Lower leg skin (tissue), 4 donors: ENCODE measurements at regions of chr3 and their contacts with region 1.

Region 1: GRCh38 chr3:15875016-15875689 is 77.4 kb upstream of the ANKRD28 start:
- DNase-seq: no peak
- H3K4me3 ChIP-seq: no peak overlapping the region
- CTCF ChIP-seq: no peak
- POLR2A ChIP-seq: no peak

Region 2: GRCh38 chr3:14885292-14885691 is 989.9 kb before region 1 on chr3:
- intact Hi-C with region 1: loop called (anchors 10 kb)
- DNase-seq: no peak
- H3K4me3 ChIP-seq: no peak overlapping the region
- CTCF ChIP-seq: no peak
- POLR2A ChIP-seq: no peak

Region 3: GRCh38 chr3:15753056-15753710 is 122.0 kb before region 1 on chr3:
- intact Hi-C with region 1: no loop called
- DNase-seq: no peak
- H3K4me3 ChIP-seq: no peak overlapping the region
- CTCF ChIP-seq: no peak
- POLR2A ChIP-seq: no peak

Region 4: GRCh38 chr3:15768421-15769255 is 106.5 kb before region 1 on chr3:
- intact Hi-C with region 1: no loop called
- DNase-seq: no peak
- H3K4me3 ChIP-seq: no peak overlapping the region
- CTCF ChIP-seq: no peak
- POLR2A ChIP-seq: no peak